ENCODE measurements at regions of chr5 and their contacts with region 1.

Region 1: GRCh38 chr5:135551593-135552447 is 16.1 kb upstream of the NEUROG1 start:
- DNase-seq: peak; percentile 77 to 80 (median 80)
- ATAC-seq: peak; percentile 93
- H3K4me3 ChIP-seq: no peak overlapping the region
- H3K27ac ChIP-seq: no peak overlapping the region
- H3K4me1 ChIP-seq: peaks cover 3% of the 10 kb centered on the region in 2 experiments; a peak in 2 of 5 replicates
- H3K27me3 ChIP-seq: peaks cover 0 to 16% of the 10 kb centered on the region in 2 experiments; a peak in 3 of 5 replicates
- CTCF ChIP-seq: peak; percentile 90 to 93 (median 93)
- EP300 ChIP-seq: no peak
- POLR2A ChIP-seq: no peak
- RAD21 ChIP-seq: peak; percentile 96 to 98

Region 2: GRCh38 chr5:135410348-135410747 is 141.5 kb before region 1 on chr5:
- CTCF ChIA-PET with region 1: no interaction called
- POLR2A ChIA-PET with region 1: no interaction called
- in situ Hi-C with region 1: no loop called
- intact Hi-C with region 1: no loop called
- DNase-seq: no peak
- ATAC-seq: no peak
- H3K4me3 ChIP-seq: no peak overlapping the region
- H3K27ac ChIP-seq: no peak overlapping the region
- H3K4me1 ChIP-seq: no peaks in the 10 kb centered on the region; a peak in 1 of 5 replicates
- H3K27me3 ChIP-seq: no peaks in the 10 kb centered on the region
- CTCF ChIP-seq: no peak
- EP300 ChIP-seq: no peak
- POLR2A ChIP-seq: no peak
- RAD21 ChIP-seq: no peak

Region 3: DNA sequence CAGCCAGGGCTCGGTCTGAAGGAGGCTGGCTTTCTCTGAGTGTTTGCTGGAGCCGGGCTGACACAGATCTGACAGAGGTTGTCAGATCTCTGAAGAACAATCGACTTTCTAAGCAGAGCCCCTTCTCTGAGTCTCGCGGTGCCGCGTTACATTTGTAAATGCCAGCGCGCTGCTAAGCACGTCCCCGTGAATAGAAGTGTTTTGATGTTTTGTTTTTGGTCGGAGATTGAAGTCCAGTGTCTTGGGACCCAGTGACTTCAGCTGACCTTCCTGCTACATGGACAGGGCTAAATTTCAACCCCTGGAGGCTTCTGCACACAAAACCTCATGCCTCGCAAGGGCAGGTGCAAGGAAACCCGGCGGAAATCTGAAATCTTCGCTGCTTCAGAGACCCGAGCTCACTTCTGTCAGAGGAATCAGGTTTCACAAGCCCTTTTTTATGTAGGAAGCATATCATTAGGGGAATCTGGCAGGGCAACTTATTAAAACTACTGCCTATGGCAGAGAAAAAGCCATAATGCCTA is 43.3 kb before region 1 on chr5:
- CTCF ChIA-PET with region 1: no interaction called
- POLR2A ChIA-PET with region 1: no interaction called
- in situ Hi-C with region 1: no loop called
- intact Hi-C with region 1: loop called (anchors 5 kb)
- DNase-seq: no peak
- ATAC-seq: no peak
- H3K4me3 ChIP-seq: no peak overlapping the region
- H3K27ac ChIP-seq: no peak overlapping the region
- H3K4me1 ChIP-seq: peaks cover 0 to 9% of the 10 kb centered on the region in 2 experiments; a peak in 2 of 5 replicates
- H3K27me3 ChIP-seq: no peaks in the 10 kb centered on the region; a peak in 2 of 5 replicates
- CTCF ChIP-seq: no peak
- EP300 ChIP-seq: no peak
- POLR2A ChIP-seq: no peak
- RAD21 ChIP-seq: no peak

Region 4: GRCh38 chr5:135602882-135603721 is 51.3 kb after region 1 on chr5:
- CTCF ChIA-PET with region 1: no interaction called
- POLR2A ChIA-PET with region 1: no interaction called
- in situ Hi-C with region 1: no loop called
- intact Hi-C with region 1: no loop called
- DNase-seq: no peak
- ATAC-seq: no peak
- H3K4me3 ChIP-seq: no peak overlapping the region
- H3K27ac ChIP-seq: no peak overlapping the region
- H3K4me1 ChIP-seq: peaks cover 0 to 5% of the 10 kb centered on the region in 2 experiments; a peak in 2 of 5 replicates
- H3K27me3 ChIP-seq: no peaks in the 10 kb centered on the region
- CTCF ChIP-seq: no peak
- EP300 ChIP-seq: no peak
- POLR2A ChIP-seq: no peak
- RAD21 ChIP-seq: no peak

Region 5: DNA sequence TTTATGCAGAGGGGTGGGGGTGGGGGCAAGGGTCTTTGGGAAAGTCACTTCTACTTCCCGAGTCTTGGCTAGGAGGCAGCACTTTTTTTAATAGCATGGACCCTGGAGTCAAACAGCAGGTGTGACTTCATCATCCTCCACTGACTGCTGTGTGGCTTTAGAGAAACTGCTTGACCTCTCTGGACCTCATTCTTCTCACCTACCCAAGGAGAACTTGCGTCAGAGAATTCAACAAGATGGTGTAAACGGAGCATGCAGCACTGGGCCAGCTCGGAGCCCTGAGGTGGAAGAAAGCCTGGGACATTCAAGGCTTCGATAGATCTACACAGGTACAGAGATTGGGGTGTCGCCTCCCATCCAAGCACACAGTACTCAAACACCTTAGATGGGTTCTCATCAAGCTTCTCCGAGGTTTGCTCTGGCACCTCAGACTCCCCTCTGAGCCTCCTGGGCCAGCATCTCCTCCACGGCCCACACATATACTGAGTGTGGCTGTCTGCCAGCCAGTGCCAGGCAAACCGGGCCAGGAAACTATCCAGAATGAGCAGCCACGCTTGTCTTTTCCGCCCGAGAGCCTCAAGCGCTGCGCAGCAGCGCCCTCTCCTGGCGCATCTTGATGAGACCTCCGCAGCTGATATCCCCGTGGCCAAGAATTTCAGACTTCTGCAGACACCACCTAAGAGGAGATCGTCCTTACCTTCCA is 278.0 kb after region 1 on chr5:
- CTCF ChIA-PET with region 1: interaction called, 12 read pairs
- POLR2A ChIA-PET with region 1: no interaction called
- in situ Hi-C with region 1: loop called (anchors 5 kb)
- intact Hi-C with region 1: loop called (anchors 2 kb)
- DNase-seq: peak; percentile 72 to 78 (median 75)
- ATAC-seq: peak; percentile 83
- H3K4me3 ChIP-seq: no peak overlapping the region
- H3K27ac ChIP-seq: no peak overlapping the region
- H3K4me1 ChIP-seq: peaks cover 0 to 5% of the 10 kb centered on the region in 2 experiments; a peak in 1 of 5 replicates
- H3K27me3 ChIP-seq: peaks cover 2 to 63% of the 10 kb centered on the region in 2 experiments; a peak in 3 of 5 replicates
- CTCF ChIP-seq: peak; percentile 85 to 92 (median 88)
- EP300 ChIP-seq: no peak
- POLR2A ChIP-seq: no peak
- RAD21 ChIP-seq: peak; percentile 77 to 82

Measured in K562 (cell line).